ENCODE measurements at regions of chr3 and their contacts with region 1.

Region 1: DNA sequence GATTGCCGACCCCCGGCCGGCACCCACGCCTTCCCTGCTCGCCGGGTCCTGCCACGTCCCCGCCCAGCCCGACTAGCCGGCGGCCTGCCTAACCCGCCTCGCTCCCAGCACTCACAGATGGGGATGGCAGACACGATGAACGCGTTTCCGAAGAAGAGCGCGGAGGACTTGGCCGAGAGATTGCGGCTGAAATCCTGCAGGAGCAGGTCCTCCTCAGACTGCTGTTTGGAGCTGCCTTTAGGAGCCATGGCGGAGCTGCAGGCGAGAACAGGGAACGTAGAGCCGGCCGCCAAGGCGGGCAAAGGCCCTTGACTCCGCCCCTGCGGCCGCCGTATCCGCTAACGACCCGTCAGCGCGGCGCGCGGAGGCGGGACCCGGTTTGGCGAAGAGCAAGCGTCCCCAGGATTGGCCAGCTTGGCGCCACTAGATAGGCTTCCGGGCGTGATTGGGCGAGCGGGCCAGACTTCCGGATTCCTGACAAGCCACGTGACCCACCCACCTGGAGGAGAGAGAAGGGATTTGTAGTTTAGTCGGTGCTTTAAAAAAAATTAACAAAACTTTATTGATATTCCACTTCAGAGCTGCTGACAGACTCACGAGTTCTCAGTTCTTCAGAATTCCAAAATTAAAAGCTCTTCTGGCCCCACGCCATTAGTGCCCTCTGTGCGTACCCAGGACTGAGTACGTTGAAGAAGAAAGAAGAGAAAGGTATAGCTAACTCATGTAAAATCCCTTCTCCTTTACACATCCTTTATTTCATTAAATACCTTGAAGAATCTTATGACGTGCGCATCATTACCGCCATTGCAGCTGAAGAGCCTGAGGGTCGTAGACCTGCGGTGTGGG is at the start of gene SSR3:
- DNase-seq: peak; percentile 95
- ATAC-seq: peak; percentile 99
- H3K4me3 ChIP-seq: peak within 1 kb of the TSS; percentile 92
- H3K27ac ChIP-seq: peak within 1 kb of the TSS; percentile 83
- H3K4me1 ChIP-seq: peaks cover 2% of the 10 kb centered on the region; the same call in 1 of the 2 replicates
- H3K27me3 ChIP-seq: no peaks in the 10 kb centered on the region
- CTCF ChIP-seq: peak in 1 of 3 experiments; percentile 2; a peak in 1 of 6 replicates
- EP300 ChIP-seq: no peak; a peak in 1 of 4 replicates
- POLR2A ChIP-seq: peak; percentile 95
- RAD21 ChIP-seq: no peak
- polyA plus RNA-seq, gene SSR3: 278 to 345 TPM

Region 2: DNA sequence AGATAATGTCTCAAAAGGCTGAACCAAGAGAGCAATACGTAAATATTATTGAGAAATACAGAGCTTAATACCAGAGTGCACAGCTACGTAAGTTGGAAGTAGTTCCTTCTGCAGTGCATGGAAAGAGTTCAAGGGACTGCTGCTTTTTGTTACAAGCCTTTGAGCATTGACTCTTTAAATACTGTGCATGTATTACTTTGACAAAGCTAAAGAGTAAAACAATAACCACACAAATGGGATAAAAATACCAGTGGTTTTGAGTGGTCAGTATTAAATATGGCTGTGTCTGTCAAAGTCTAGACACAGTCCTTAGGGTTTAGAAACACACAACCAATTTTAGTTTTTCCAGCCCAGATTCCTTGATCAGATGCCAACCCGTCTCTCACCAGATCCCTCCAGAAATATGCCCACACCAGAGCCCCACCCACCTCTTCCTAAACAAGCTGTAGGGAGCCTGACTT is 62.2 kb before region 1 on chr3:
- CTCF ChIA-PET with region 1: no interaction called
- POLR2A ChIA-PET with region 1: no interaction called
- RAD21 ChIA-PET with region 1: no interaction called
- SMC1A ChIA-PET with region 1: no interaction called
- in situ Hi-C with region 1: no loop called
- intact Hi-C with region 1: no loop called
- DNase-seq: no peak
- ATAC-seq: no peak
- H3K4me3 ChIP-seq: no peak overlapping the region
- H3K27ac ChIP-seq: no peak overlapping the region
- H3K4me1 ChIP-seq: peaks cover 14% of the 10 kb centered on the region
- H3K27me3 ChIP-seq: no peaks in the 10 kb centered on the region
- CTCF ChIP-seq: no peak
- EP300 ChIP-seq: no peak
- POLR2A ChIP-seq: no peak
- RAD21 ChIP-seq: no peak

Region 3: DNA sequence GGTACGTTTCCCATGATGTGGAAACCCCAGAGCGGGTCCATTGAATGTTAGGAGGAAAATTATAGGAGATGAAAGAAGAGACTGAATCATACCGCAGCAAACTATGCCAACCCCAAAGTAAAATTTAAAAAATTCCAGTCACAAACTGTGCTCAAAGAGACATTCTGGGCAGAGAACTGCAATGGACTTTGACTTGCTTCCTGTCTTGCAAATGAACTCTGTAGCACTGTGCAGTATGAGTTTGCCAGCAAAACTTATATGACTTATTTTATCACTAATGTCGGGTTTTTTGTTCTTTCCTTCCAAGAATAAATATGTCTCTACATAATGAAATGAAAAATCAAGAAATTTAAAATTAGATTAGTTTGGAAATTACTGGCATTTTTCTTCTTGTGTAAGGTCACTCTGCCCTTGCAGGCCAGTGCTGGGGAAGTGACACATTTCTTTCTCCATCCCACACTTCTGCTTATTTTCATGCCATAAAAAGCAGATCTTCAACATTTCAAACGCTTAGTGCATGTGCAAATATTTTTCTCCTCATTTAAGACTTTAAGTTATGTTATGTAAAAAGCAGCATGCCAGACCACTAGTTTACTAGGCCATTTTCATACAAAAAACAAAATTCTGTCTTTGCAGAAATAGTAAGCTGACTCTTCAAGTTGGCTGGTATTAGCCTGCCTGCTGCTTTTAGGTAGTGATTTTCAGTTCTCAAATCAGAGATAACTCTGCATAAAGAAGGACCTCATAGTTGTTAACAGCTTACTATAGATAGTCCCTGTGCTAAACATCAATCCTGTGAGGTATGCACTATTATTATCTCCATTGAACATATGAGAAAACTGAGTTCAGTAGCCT is 32.1 kb after region 1 on chr3:
- CTCF ChIA-PET with region 1: interaction called, 4 read pairs
- POLR2A ChIA-PET with region 1: interaction called, 4 read pairs
- RAD21 ChIA-PET with region 1: no interaction called
- SMC1A ChIA-PET with region 1: interaction called, 16 read pairs
- in situ Hi-C with region 1: no loop called
- intact Hi-C with region 1: no loop called
- DNase-seq: no peak
- ATAC-seq: peak; percentile 67
- H3K4me3 ChIP-seq: no peak overlapping the region
- H3K27ac ChIP-seq: no peak overlapping the region
- H3K4me1 ChIP-seq: peaks cover 27% of the 10 kb centered on the region; the same call in 1 of the 2 replicates
- H3K27me3 ChIP-seq: no peaks in the 10 kb centered on the region
- CTCF ChIP-seq: no peak
- EP300 ChIP-seq: no peak
- POLR2A ChIP-seq: no peak
- RAD21 ChIP-seq: no peak

Region 4: GRCh38 chr3:156643729-156644389 is 88.8 kb after region 1 on chr3:
- CTCF ChIA-PET with region 1: interaction called, 4 read pairs
- POLR2A ChIA-PET with region 1: interaction called, 12 read pairs
- RAD21 ChIA-PET with region 1: interaction called, 17 read pairs
- SMC1A ChIA-PET with region 1: interaction called, 15 read pairs
- in situ Hi-C with region 1: no loop called
- intact Hi-C with region 1: no loop called
- DNase-seq: peak; percentile 76
- ATAC-seq: peak; percentile 90
- H3K4me3 ChIP-seq: peak overlapping the region; percentile 8; the same call in 1 of the 2 replicates
- H3K27ac ChIP-seq: peak overlapping the region; percentile 67
- H3K4me1 ChIP-seq: peaks cover 26% of the 10 kb centered on the region
- H3K27me3 ChIP-seq: no peaks in the 10 kb centered on the region
- CTCF ChIP-seq: no peak
- EP300 ChIP-seq: peak; percentile 81 to 84
- POLR2A ChIP-seq: no peak
- RAD21 ChIP-seq: no peak

Region 5: GRCh38 chr3:156655819-156656550 is 100.9 kb after region 1 on chr3:
- CTCF ChIA-PET with region 1: interaction called, 9 read pairs
- POLR2A ChIA-PET with region 1: no interaction called
- RAD21 ChIA-PET with region 1: interaction called, 9 read pairs
- SMC1A ChIA-PET with region 1: interaction called, 11 read pairs
- in situ Hi-C with region 1: no loop called
- intact Hi-C with region 1: no loop called
- DNase-seq: no peak
- ATAC-seq: peak; percentile 58
- H3K4me3 ChIP-seq: 0 out of 2 replicates have a peak overlapping the region, but pooled peaks have one; percentile 4
- H3K27ac ChIP-seq: peak overlapping the region; percentile 56
- H3K4me1 ChIP-seq: peaks cover 25% of the 10 kb centered on the region
- H3K27me3 ChIP-seq: no peaks in the 10 kb centered on the region
- CTCF ChIP-seq: no peak
- EP300 ChIP-seq: no peak
- POLR2A ChIP-seq: no peak
- RAD21 ChIP-seq: no peak

Region 6: DNA sequence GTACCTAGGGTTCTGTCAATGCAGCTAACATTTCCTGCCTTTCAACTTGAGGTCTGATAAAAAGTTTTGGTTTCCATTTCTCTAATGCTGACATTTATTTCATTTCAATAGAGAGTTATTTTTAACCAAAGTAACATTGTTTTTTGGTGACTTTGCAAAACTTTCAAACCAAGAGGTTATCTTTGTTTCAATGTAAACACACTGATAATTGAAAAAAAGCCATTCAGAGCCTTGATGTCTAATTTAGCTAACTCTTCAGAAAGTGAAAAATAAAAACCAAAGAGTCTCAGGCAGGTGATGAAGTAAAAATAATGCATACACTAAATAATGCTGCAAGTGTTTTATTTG is 109.7 kb after region 1 on chr3:
- CTCF ChIA-PET with region 1: interaction called, 8 read pairs
- POLR2A ChIA-PET with region 1: interaction called, 18 read pairs
- RAD21 ChIA-PET with region 1: interaction called, 28 read pairs
- SMC1A ChIA-PET with region 1: interaction called, 47 read pairs
- in situ Hi-C with region 1: no loop called
- intact Hi-C with region 1: loop called (anchors 2 kb)
- DNase-seq: no peak
- ATAC-seq: peak; percentile 78
- H3K4me3 ChIP-seq: no peak overlapping the region
- H3K27ac ChIP-seq: peak overlapping the region; percentile 97
- H3K4me1 ChIP-seq: peaks cover 55% of the 10 kb centered on the region
- H3K27me3 ChIP-seq: no peaks in the 10 kb centered on the region
- CTCF ChIP-seq: no peak
- EP300 ChIP-seq: peak; percentile 69 to 92; a peak in 3 of 4 replicates
- POLR2A ChIP-seq: no peak
- RAD21 ChIP-seq: no peak

Region 7: GRCh38 chr3:156816800-156817645 is 262.0 kb after region 1 on chr3:
- CTCF ChIA-PET with region 1: no interaction called
- POLR2A ChIA-PET with region 1: interaction called, 3 read pairs
- RAD21 ChIA-PET with region 1: interaction called, 5 read pairs
- SMC1A ChIA-PET with region 1: interaction called, 3 read pairs
- in situ Hi-C with region 1: loop called (anchors 10 kb)
- intact Hi-C with region 1: loop called (anchors 10 kb)
- DNase-seq: peak; percentile 55
- ATAC-seq: peak; percentile 78
- H3K4me3 ChIP-seq: peak overlapping the region; percentile 85
- H3K27ac ChIP-seq: peak overlapping the region; percentile 95
- H3K4me1 ChIP-seq: peaks cover 27% of the 10 kb centered on the region
- H3K27me3 ChIP-seq: no peaks in the 10 kb centered on the region
- CTCF ChIP-seq: peak; percentile 11 to 34 (median 21); a peak in 3 of 6 replicates
- EP300 ChIP-seq: peak; percentile 99 to 100
- POLR2A ChIP-seq: peak; percentile 94
- RAD21 ChIP-seq: peak; percentile 30